ENCODE measurements at regions of chr12 and their contacts with region 1.

Region 1: GRCh38 chr12:1185460-1186182 is 194.6 kb downstream of the ERC1 start:
- DNase-seq: no peak
- H3K4me3 Mint-ChIP-seq: no peak overlapping the region
- H3K27ac Mint-ChIP-seq: no peak overlapping the region
- H3K4me1 Mint-ChIP-seq: peaks cover 7% of the 10 kb centered on the region
- H3K27me3 Mint-ChIP-seq: no peaks in the 10 kb centered on the region

Region 2: GRCh38 chr12:1130164-1130563 is 55.5 kb before region 1 on chr12:
- CTCF ChIA-PET with region 1: no interaction called
- intact Hi-C with region 1: loop called (anchors 2 kb)
- DNase-seq: no peak
- H3K4me3 Mint-ChIP-seq: no peak overlapping the region
- H3K27ac Mint-ChIP-seq: no peak overlapping the region
- H3K4me1 Mint-ChIP-seq: peaks cover 24% of the 10 kb centered on the region
- H3K27me3 Mint-ChIP-seq: no peaks in the 10 kb centered on the region

Region 3: GRCh38 chr12:1197264-1198018 is 11.8 kb after region 1 on chr12:
- CTCF ChIA-PET with region 1: no interaction called
- intact Hi-C with region 1: no loop called
- DNase-seq: no peak
- H3K4me3 Mint-ChIP-seq: no peak overlapping the region
- H3K27ac Mint-ChIP-seq: no peak overlapping the region
- H3K4me1 Mint-ChIP-seq: peaks cover 9% of the 10 kb centered on the region
- H3K27me3 Mint-ChIP-seq: no peaks in the 10 kb centered on the region

Measured in activated naive CD4-positive, alpha-beta T cell treated with anti-CD3 and anti-CD28 coated beads for 36 hours (primary cell).